ENCODE measurements at regions of chr13 and their contacts with region 1.

Region 1: GRCh38 chr13:39095500-39095899 is 57.2 kb downstream of the NHLRC3 start:
- DNase-seq: no peak
- H3K4me3 Mint-ChIP-seq: peak overlapping the region; percentile 30
- H3K27ac Mint-ChIP-seq: peak overlapping the region; percentile 78
- H3K4me1 Mint-ChIP-seq: peaks cover 24% of the 10 kb centered on the region
- H3K27me3 Mint-ChIP-seq: no peaks in the 10 kb centered on the region

Region 2: DNA sequence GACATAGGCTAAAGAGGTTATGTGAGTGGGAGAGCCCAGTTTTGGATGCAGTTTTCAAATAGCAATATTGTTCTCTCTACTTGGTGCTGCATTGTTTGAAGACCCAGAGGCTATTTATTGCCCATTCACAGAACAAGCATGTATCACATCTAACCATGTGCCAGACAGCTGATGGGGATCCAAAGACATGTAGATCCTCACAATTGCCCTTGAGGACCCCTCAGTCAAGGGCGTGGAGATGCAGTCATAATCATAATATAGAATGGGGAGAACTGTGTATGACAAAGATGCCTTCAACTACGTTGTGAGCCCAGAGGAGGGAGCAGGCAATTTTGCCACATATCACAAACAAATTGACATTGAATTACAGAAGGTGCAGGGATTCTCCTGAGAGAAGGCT is 13.3 kb after region 1 on chr13:
- CTCF ChIA-PET with region 1: no interaction called
- intact Hi-C with region 1: no loop called
- DNase-seq: no peak
- H3K4me3 Mint-ChIP-seq: no peak overlapping the region
- H3K27ac Mint-ChIP-seq: no peak overlapping the region
- H3K4me1 Mint-ChIP-seq: peaks cover 3% of the 10 kb centered on the region
- H3K27me3 Mint-ChIP-seq: peaks cover 23% of the 10 kb centered on the region

Region 3: DNA sequence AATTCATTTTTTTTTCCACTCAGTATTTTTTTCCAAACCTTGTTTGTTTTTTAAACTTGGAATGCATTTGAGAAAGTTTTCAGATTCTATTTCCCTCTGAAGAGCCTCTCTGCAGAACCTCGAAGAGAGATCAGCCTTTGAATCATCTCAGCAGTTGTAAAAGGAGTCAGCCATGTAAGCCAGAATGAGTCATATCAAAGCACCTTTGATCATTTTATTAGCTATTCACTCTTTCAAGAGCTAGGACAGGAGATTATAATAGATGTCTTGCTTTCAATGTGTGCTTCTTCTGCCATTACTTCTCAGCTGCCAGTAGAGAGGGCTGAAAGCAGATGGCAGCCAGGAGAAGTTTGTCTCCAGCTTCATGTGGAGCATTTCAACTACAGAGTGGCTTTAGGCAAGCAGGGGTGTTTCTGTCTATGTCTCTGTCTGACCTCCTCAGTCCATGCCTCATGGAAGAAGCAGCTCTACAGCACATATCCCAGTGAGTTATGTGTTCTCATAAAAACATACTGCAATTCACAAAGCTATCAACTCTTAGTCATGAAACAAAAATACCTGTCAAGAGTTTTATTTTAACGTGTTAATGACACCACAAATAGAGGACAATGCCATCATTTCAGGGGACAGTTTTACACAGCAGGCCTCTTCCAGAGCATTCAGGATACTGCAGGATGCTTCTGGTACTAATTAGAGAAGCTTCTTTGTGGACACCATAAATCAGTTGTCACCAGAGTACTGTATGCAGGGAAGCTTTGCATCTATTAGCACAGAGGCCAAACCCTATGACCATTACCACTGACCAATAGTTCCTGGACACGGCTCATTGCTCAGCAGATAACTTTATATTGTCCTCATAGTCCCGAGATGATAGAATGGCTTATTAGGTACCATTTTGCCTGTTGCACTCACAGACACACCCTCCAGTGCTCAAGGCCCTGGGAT is 37.1 kb after region 1 on chr13:
- CTCF ChIA-PET with region 1: no interaction called
- intact Hi-C with region 1: loop called (anchors 1 kb)
- DNase-seq: no peak
- H3K4me3 Mint-ChIP-seq: no peak overlapping the region
- H3K27ac Mint-ChIP-seq: no peak overlapping the region
- H3K4me1 Mint-ChIP-seq: peaks cover 6% of the 10 kb centered on the region
- H3K27me3 Mint-ChIP-seq: peaks cover 27% of the 10 kb centered on the region

Region 4: GRCh38 chr13:39159393-39159792 is 63.9 kb after region 1 on chr13:
- CTCF ChIA-PET with region 1: no interaction called
- intact Hi-C with region 1: loop called (anchors 1 kb)
- DNase-seq: peak; percentile 31
- H3K4me3 Mint-ChIP-seq: no peak overlapping the region
- H3K27ac Mint-ChIP-seq: no peak overlapping the region
- H3K4me1 Mint-ChIP-seq: peaks cover 14% of the 10 kb centered on the region
- H3K27me3 Mint-ChIP-seq: peaks cover 35% of the 10 kb centered on the region

Region 5: GRCh38 chr13:39196958-39197646 is 101.6 kb after region 1 on chr13:
- CTCF ChIA-PET with region 1: interaction called, 3 read pairs
- intact Hi-C with region 1: loop called (anchors 1 kb)
- DNase-seq: no peak
- H3K4me3 Mint-ChIP-seq: no peak overlapping the region
- H3K27ac Mint-ChIP-seq: peak overlapping the region; percentile 60
- H3K4me1 Mint-ChIP-seq: peaks cover 11% of the 10 kb centered on the region
- H3K27me3 Mint-ChIP-seq: peaks cover 17% of the 10 kb centered on the region

Region 6: GRCh38 chr13:39538816-39539790 is 443.6 kb after region 1 on chr13:
- CTCF ChIA-PET with region 1: no interaction called
- intact Hi-C with region 1: no loop called
- DNase-seq: no peak
- H3K4me3 Mint-ChIP-seq: no peak overlapping the region
- H3K27ac Mint-ChIP-seq: no peak overlapping the region
- H3K4me1 Mint-ChIP-seq: no peaks in the 10 kb centered on the region
- H3K27me3 Mint-ChIP-seq: peaks cover 11% of the 10 kb centered on the region

Measured in activated naive CD4-positive, alpha-beta T cell treated with anti-CD3 and anti-CD28 coated beads for 36 hours (primary cell).